ENCODE measurements at regions of chr20 and their contacts with region 1.

Region 1: GRCh38 chr20:2800521-2801285 is at the start of gene CPXM1:
- DNase-seq: peak; percentile 77
- ATAC-seq: peak; percentile 78
- H3K4me3 Mint-ChIP-seq: peak within 1 kb of the TSS; percentile 95
- H3K27ac Mint-ChIP-seq: peak within 1 kb of the TSS; percentile 75
- H3K4me1 Mint-ChIP-seq: peaks cover 31% of the 10 kb centered on the region
- H3K27me3 Mint-ChIP-seq: peaks cover 57% of the 10 kb centered on the region
- CTCF ChIP-seq: no peak
- total RNA-seq, gene CPXM1: 51.2 to 57.1 TPM (median 54.6 TPM) in 3 replicates

Region 2: GRCh38 chr20:2780948-2781347 is 19.8 kb before region 1 on chr20:
- CTCF ChIA-PET with region 1: no interaction called
- POLR2A ChIA-PET with region 1: no interaction called
- DNase-seq: no peak
- ATAC-seq: peak; percentile 43
- H3K4me3 Mint-ChIP-seq: no peak overlapping the region
- H3K27ac Mint-ChIP-seq: no peak overlapping the region
- H3K4me1 Mint-ChIP-seq: no peaks in the 10 kb centered on the region
- H3K27me3 Mint-ChIP-seq: peaks cover 20% of the 10 kb centered on the region
- CTCF ChIP-seq: no peak

Region 3: GRCh38 chr20:2816583-2817340 is 16.1 kb after region 1 on chr20:
- CTCF ChIA-PET with region 1: interaction called, 12 read pairs
- POLR2A ChIA-PET with region 1: no interaction called
- DNase-seq: peak; percentile 56
- ATAC-seq: peak; percentile 18
- H3K4me3 Mint-ChIP-seq: no peak overlapping the region
- H3K27ac Mint-ChIP-seq: no peak overlapping the region
- H3K4me1 Mint-ChIP-seq: peaks cover 14% of the 10 kb centered on the region
- H3K27me3 Mint-ChIP-seq: peaks cover 60% of the 10 kb centered on the region
- CTCF ChIP-seq: peak; percentile 31; the same call in 1 of the 2 replicates

Measured in WTC11 (cell line).